ENCODE measurements at regions of chr9 and their contacts with region 1.

Region 1: GRCh38 chr9:27529316-27530278 is at the start of gene MOB3B:
- DNase-seq: peak; percentile 87 to 95
- ATAC-seq: peak; percentile 94
- H3K4me3 ChIP-seq: peak within 1 kb of the TSS; percentile 46 to 87
- H3K27ac ChIP-seq: peak within 1 kb of the TSS; percentile 71 to 83
- H3K4me1 ChIP-seq: peaks cover 0 to 1% of the 10 kb centered on the region in 2 donors
- H3K27me3 ChIP-seq: no peaks in the 10 kb centered on the region
- total RNA-seq, gene MOB3B: 5.8 to 9.0 TPM

Region 2: DNA sequence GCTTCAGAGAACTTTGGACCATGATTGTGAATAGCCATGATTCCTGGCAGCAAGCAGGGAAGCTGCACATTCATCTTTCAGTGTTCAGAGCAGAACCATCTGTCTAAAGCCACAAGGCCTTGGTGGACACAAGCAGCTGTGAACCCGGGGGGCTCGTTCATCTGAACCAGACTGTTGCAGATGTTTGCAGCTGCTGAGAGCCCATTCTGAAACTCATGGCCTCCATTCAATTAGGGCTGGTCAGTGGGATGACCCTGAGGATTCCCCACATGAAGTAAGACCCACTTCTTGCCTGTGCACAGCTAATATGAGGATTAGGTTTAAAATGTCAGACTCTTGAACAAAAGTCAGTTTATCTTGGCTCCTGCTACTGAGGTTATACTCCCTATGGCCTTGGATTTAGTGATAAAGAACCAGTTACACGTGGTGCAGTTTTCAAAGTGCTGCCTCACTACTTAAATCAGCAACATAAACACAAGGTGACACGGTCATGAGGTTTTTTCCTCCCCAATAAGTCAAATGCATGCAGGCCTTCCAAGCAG is 115.3 kb before region 1 on chr9:
- intact Hi-C with region 1: loop called in 1 of 2 experiments (anchors 2 kb)
- DNase-seq: no peak
- ATAC-seq: peak; percentile 57
- H3K4me3 ChIP-seq: no peak overlapping the region
- H3K27ac ChIP-seq: no peak overlapping the region
- H3K4me1 ChIP-seq: peaks cover 4 to 15% of the 10 kb centered on the region in 2 donors
- H3K27me3 ChIP-seq: no peaks in the 10 kb centered on the region

Measured in aorta (tissue), 5 donors.